ENCODE measurements at regions of chr11 and their contacts with region 1.

Region 1: GRCh38 chr11:76919887-76920746 is 59.4 kb downstream of the ACER3 start:
- DNase-seq: peak; percentile 48
- ATAC-seq: peak; percentile 85
- H3K4me3 Mint-ChIP-seq: no peak overlapping the region
- H3K27ac Mint-ChIP-seq: no peak overlapping the region
- H3K4me1 Mint-ChIP-seq: peaks cover 14% of the 10 kb centered on the region
- H3K27me3 Mint-ChIP-seq: no peaks in the 10 kb centered on the region
- CTCF ChIP-seq: peak; percentile 78

Region 2: DNA sequence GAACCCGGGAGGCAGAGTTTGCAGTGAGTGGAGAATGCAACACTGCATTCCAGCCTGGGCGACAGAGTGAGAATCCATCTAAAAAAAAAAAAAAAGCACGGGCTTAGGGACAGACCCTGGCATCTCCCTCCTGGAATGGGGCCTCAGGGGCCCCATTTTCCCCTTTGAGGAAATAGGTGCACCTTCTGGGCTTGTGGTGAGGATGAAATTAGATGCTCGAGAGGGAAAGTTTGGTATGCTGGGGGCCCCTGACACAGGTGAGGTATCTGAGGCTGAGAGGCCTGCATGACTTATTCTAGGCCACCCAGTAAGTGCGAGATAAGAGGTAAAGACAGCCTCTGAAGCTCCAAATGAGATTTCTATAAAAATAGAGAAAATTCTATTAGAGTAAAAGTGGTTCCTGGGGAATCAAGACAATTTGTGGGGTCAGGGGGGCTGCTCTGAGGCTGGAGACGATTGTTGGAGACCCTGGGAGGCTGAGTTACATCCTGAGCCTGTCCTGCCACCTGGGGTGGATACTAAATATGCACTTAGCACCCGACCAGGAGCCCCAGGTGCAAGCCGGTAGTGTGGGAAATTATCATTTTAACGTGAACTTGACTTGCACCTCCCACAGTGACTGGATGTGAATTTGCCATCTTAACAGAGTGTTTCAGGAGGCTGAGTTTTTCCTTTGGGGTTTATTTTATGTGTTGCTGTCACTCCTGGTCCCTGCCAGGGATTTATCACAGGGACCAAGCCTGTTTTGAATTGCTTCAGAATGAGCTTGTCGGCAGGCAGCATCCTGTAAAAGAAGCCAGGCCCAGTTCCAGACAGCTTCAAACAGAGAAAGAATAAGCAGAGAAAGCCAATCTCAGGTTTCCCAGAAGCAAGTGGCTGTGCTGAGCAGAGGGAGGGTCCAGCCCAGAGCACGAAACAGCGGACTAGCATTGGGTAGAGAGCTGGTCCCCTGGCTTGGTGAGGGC is 185.4 kb before region 1 on chr11:
- CTCF ChIA-PET with region 1: interaction called, 133 read pairs
- POLR2A ChIA-PET with region 1: interaction called, 3 read pairs
- DNase-seq: no peak
- ATAC-seq: peak; percentile 9
- H3K4me3 Mint-ChIP-seq: no peak overlapping the region
- H3K27ac Mint-ChIP-seq: peak overlapping the region; percentile 67; the same call in 1 of the 2 replicates
- H3K4me1 Mint-ChIP-seq: peaks cover 33% of the 10 kb centered on the region
- H3K27me3 Mint-ChIP-seq: peaks cover 2% of the 10 kb centered on the region; the same call in 1 of the 2 replicates
- CTCF ChIP-seq: no peak

Region 3: GRCh38 chr11:76823481-76824078 is 96.5 kb before region 1 on chr11:
- CTCF ChIA-PET with region 1: interaction called, 11 read pairs
- POLR2A ChIA-PET with region 1: no interaction called
- DNase-seq: no peak
- ATAC-seq: peak; percentile 63
- H3K4me3 Mint-ChIP-seq: no peak overlapping the region
- H3K27ac Mint-ChIP-seq: no peak overlapping the region
- H3K4me1 Mint-ChIP-seq: peaks cover 20% of the 10 kb centered on the region
- H3K27me3 Mint-ChIP-seq: no peaks in the 10 kb centered on the region
- CTCF ChIP-seq: no peak

Region 4: GRCh38 chr11:76888989-76889388 is 31.1 kb before region 1 on chr11:
- CTCF ChIA-PET with region 1: interaction called, 15 read pairs
- POLR2A ChIA-PET with region 1: no interaction called
- DNase-seq: no peak
- ATAC-seq: no peak
- H3K4me3 Mint-ChIP-seq: no peak overlapping the region
- H3K27ac Mint-ChIP-seq: no peak overlapping the region
- H3K4me1 Mint-ChIP-seq: peaks cover 1% of the 10 kb centered on the region
- H3K27me3 Mint-ChIP-seq: no peaks in the 10 kb centered on the region
- CTCF ChIP-seq: no peak

Region 5: DNA sequence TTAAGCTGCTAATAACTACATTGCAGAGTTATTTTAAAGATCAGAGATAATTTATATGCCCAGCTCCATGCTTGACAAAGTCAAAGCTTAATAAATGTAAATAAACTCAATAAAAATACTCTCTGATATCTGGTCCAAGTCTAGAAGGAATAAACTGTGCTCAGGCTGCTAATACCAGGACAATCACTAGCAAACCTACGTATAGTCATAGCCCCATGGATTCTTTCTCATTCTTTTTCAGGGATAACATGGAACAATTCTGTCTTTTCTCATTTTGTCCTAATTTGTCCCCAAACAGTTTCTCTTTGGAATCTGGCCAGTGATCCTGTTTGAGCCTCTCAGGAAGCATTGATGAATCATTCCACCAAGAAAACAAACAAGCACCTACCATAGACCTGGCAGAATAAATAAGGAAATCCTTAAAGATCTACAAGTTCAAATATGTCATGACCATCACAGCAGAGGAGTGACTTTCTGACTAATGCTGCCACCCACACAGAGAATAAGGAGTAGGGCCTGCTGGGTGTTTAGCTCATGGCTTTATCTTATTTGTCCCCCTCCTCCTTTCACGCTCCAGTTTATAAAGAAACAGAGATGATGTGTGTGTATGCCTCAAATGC is 100.0 kb after region 1 on chr11:
- CTCF ChIA-PET with region 1: interaction called, 22 read pairs
- POLR2A ChIA-PET with region 1: no interaction called
- DNase-seq: no peak
- ATAC-seq: no peak
- H3K4me3 Mint-ChIP-seq: no peak overlapping the region
- H3K27ac Mint-ChIP-seq: no peak overlapping the region
- H3K4me1 Mint-ChIP-seq: peaks cover 31% of the 10 kb centered on the region
- H3K27me3 Mint-ChIP-seq: no peaks in the 10 kb centered on the region
- CTCF ChIP-seq: no peak

Region 6: GRCh38 chr11:77091146-77091940 is 171.2 kb after region 1 on chr11:
- CTCF ChIA-PET with region 1: interaction called, 28 read pairs
- POLR2A ChIA-PET with region 1: no interaction called
- DNase-seq: peak; percentile 94
- ATAC-seq: peak; percentile 92
- H3K4me3 Mint-ChIP-seq: no peak overlapping the region
- H3K27ac Mint-ChIP-seq: peak overlapping the region; percentile 86; the same call in 1 of the 2 replicates
- H3K4me1 Mint-ChIP-seq: peaks cover 7% of the 10 kb centered on the region
- H3K27me3 Mint-ChIP-seq: no peaks in the 10 kb centered on the region
- CTCF ChIP-seq: peak; percentile 85

Measured in WTC11 (cell line).